ENCODE measurements at regions of chr13 and their contacts with region 1.

Region 1: GRCh38 chr13:110225609-110226562 is 81.1 kb downstream of the COL4A1 start:
- DNase-seq: no peak
- H3K4me3 ChIP-seq: no peak overlapping the region
- H3K27ac ChIP-seq: peak overlapping the region in 4 of 59 donors; percentile 2 to 39 (median 28)
- H3K27me3 ChIP-seq: no peaks in the 10 kb centered on the region
- CTCF ChIP-seq: no peak

Region 2: DNA sequence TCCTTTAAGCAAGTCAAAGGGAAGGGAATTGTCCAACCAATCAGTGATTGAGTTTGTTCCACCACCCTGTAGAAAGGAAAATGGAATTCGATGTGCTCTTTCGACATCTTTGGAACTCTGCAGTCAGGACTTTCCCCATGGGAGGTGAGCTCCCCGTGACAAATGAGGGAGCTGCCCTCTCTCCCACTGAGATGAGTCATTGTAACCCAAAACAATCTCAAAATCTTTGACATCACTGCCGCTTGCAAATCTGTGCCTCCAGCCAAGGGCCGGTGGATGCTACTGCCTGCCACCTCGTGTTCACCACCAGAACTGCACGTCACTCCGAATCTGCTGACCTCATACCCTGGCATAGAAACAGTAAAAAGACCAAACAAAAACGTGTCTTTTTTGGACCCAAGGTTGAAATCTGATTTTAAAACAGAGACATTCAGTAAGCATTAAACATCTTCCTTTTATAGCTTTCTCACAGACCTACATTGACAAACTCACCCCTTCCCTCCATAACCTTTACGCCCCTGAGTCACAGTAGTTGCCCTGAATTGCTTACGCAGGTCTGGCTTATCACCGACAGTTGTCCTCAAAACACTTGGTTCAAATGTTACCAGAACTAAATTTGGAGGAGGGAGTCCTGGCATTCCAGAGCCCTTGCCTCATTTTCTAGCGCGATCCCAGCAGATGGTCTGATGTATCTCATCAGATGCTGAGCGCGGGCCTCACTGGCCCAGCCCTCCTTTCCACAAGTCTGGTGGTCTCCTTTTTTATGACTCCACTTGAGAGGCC is 186.4 kb after region 1 on chr13:
- intact Hi-C with region 1: loop called (anchors 1 to 5 kb)
- DNase-seq: peak; percentile 46 to 89 (median 84)
- H3K4me3 ChIP-seq: peak overlapping the region in 35 of 59 donors; percentile 2 to 56 (median 23)
- H3K27ac ChIP-seq: peak overlapping the region in 51 of 59 donors; percentile 2 to 84 (median 58)
- H3K27me3 ChIP-seq: no peaks in the 10 kb centered on the region
- CTCF ChIP-seq: peak; percentile 75 to 98 (median 96)

Region 3: GRCh38 chr13:110615322-110616102 is 389.6 kb after region 1 on chr13 and contains the start of gene NAXD:
- intact Hi-C with region 1: loop called in 1 of 2 experiments (anchors 10 kb)
- DNase-seq: peak; percentile 92 to 98 (median 96)
- H3K4me3 ChIP-seq: peak within 1 kb of the TSS; percentile 66 to 98 (median 91)
- H3K27ac ChIP-seq: peak within 1 kb of the TSS; percentile 10 to 97 (median 90)
- H3K27me3 ChIP-seq: peaks cover 0 to 6% (median 0%) of the 10 kb centered on the region in 45 donors
- CTCF ChIP-seq: peak in 32 of 56 donors; percentile 5 to 54 (median 26)
- total RNA-seq, gene NAXD: 39.9 to 64.4 (median 50.7) TPM

Measured in dorsolateral prefrontal cortex (tissue), 120 donors.